ENCODE measurements at regions of chrX and their contacts with region 1.

Region 1: GRCh38 chrX:132968296-132968949 is 10.0 kb upstream of the HS6ST2 start:
- DNase-seq: no peak
- ATAC-seq: no peak

Region 2: GRCh38 chrX:133171962-133172708 is 203.7 kb after region 1 on chrX:
- intact Hi-C with region 1: loop called in 1 of 2 experiments (anchors 10 kb)
- DNase-seq: no peak
- ATAC-seq: no peak

Region 3: DNA sequence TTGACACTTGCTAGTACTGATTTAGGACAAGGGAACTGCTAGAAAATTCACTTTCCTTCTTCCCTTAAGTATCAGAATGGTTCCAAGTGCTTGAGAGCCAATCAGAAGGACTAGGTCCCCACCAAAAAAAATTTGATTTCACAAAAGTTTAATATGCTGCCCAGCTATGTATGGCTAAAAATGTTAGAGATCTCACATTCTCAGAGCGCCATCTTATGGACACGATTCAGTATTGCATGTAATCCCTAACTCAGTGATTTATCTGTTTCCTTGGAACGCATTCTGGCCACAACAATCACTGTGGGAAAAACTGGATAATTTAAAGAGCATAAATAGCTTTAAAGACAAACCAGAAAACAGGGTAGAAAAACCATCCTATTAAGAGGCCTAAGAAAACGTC is 702.0 kb after region 1 on chrX:
- intact Hi-C with region 1: loop called in 1 of 2 experiments (anchors 10 kb)
- DNase-seq: no peak
- ATAC-seq: peak; percentile 30 to 50

Measured in left cardiac atrium (tissue), 4 donors.